Dorsolateral prefrontal cortex (tissue), 120 donors: ENCODE measurements at regions of chr20 and their contacts with region 1.

Region 1: GRCh38 chr20:38645980-38646858 is 44.6 kb downstream of the ARHGAP40 start:
- DNase-seq: peak; percentile 54 to 87 (median 68)
- H3K4me3 ChIP-seq: peak overlapping the region in 57 of 59 donors; percentile 5 to 68 (median 47)
- H3K27ac ChIP-seq: peak overlapping the region in 2 of 59 donors; percentile 16 to 27
- H3K27me3 ChIP-seq: peaks cover 0 to 18% (median 4%) of the 10 kb centered on the region in 45 donors
- CTCF ChIP-seq: peak; percentile 80 to 100 (median 97)

Region 2: GRCh38 chr20:38581013-38581412 is 65.2 kb before region 1 on chr20 and contains the start of gene ADIG:
- intact Hi-C with region 1: loop called in 1 of 2 experiments (anchors 10 kb)
- DNase-seq: peak in 9 of 10 donors; percentile 39 to 76 (median 70)
- H3K4me3 ChIP-seq: no peak within 1 kb of the TSS
- H3K27ac ChIP-seq: peak within 1 kb of the TSS in 15 of 59 donors; percentile 0 to 62 (median 29)
- H3K27me3 ChIP-seq: no peaks in the 10 kb centered on the region
- CTCF ChIP-seq: peak in 11 of 56 donors; percentile 6 to 41 (median 23)
- total RNA-seq, gene ADIG: 0.74 to 2.0 (median 1.3) TPM in 9 of 120 experiments, not detected in the others

Region 3: DNA sequence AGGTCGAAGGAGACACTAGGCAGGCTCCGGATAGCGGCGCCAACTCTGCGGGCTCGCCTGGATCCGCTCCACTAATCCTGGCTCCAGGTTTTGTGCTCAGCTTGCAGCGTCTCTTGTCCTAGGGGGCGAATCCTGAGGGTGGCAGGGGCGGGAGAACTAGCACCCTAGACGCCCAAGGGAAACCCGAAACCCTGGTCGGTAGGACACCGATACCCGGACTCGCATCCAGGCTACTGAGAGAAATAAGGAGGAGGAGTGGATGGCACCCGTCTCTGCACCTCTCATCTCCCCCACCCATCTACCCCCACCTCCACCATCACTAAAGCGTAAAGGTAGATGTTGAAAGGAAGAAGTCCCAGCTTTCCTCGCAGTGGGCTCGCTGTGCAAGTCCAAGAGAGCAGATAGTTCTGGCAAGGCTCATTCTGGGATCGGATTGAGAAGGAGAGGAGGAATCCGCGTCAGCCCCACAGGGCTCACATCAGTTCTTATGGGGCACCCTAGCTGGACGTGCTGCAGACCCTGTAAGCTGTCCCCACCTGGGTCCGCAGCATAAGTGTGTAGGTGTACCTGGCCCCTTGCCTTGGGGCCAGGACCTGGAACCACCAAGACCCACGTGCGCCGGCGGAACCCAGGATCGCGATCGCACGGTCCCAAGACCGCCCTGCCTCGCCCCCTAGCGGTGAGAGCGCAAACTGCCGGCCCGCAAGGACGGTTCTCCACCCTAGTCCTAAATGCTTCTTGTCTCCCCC is 84.9 kb after region 1 on chr20:
- intact Hi-C with region 1: loop called (anchors 5 kb)
- DNase-seq: peak in 8 of 10 donors; percentile 49 to 81 (median 70)
- H3K4me3 ChIP-seq: peak overlapping the region in 58 of 59 donors; percentile 7 to 67 (median 42)
- H3K27ac ChIP-seq: peak overlapping the region in 1 of 59 donors; percentile 40
- H3K27me3 ChIP-seq: peaks cover 22 to 88% (median 71%) of the 10 kb centered on the region in 45 donors
- CTCF ChIP-seq: peak; percentile 79 to 99 (median 96)

Region 4: GRCh38 chr20:38748097-38748860 is 102.1 kb after region 1 on chr20 and contains the start of gene ACTR5:
- intact Hi-C with region 1: loop called (anchors 1 to 2 kb)
- DNase-seq: peak; percentile 81 to 92 (median 89)
- H3K4me3 ChIP-seq: peak within 1 kb of the TSS; percentile 47 to 97 (median 89)
- H3K27ac ChIP-seq: peak within 1 kb of the TSS in 57 of 59 donors; percentile 16 to 96 (median 85)
- H3K27me3 ChIP-seq: peaks cover 0 to 5% (median 0%) of the 10 kb centered on the region in 45 donors
- CTCF ChIP-seq: peak in 15 of 56 donors; percentile 0 to 46 (median 28)
- total RNA-seq, gene ACTR5: 7.0 to 13.6 (median 9.9) TPM

Region 5: GRCh38 chr20:38893565-38894090 is 247.4 kb after region 1 on chr20:
- intact Hi-C with region 1: loop called (anchors 1 to 5 kb)
- DNase-seq: peak; percentile 76 to 89 (median 82)
- H3K4me3 ChIP-seq: peak overlapping the region in 29 of 59 donors; percentile 3 to 39 (median 23)
- H3K27ac ChIP-seq: peak overlapping the region; percentile 58 to 100 (median 99)
- H3K27me3 ChIP-seq: no peaks in the 10 kb centered on the region
- CTCF ChIP-seq: peak; percentile 45 to 97 (median 93)

Region 6: DNA sequence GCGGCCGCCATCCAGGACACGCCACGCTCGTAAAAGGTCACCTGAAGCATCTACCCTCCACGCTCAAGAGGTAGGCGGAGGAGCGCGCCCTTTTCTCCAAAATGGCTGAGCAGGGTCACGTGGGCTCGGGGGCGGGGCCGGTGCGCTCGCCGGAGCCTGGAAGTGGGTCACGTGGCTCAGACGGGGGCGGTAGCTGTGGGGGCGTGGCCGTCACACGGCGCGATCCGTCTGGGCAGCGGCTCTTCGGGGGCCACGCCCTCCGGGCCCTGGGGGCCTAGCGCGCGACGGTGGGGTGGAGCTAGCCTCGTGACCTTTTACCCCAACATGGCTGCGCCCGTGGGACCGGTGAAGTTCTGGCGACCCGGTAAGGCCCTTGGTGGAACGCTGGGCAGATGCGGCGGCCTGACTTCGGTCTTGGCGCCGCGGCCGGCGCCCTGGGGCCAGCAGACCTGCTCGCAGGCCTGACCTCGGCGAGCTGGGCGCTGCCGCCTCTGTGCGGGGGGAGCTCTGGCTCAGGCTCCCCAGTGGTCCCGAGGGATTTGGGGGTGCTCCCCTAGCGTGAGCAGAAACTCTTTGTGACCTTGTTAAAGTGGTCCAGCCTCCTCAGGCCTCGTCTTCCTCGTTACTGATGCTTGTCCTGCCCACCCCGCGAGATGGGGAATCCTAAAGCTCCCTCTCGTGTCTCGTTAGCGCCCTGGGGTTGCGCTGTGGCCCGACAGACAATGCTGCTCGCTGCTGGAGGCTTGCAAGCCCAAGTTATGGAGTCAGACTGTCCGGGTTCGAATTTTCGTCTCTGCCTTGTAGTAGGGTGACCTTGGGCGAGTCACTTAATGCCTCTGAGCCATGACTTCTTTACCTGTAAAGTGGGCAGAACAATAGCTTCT is 316.1 kb after region 1 on chr20 and contains the start of gene DHX35:
- intact Hi-C with region 1: loop called in 1 of 2 experiments (anchors 5 kb)
- DNase-seq: peak; percentile 96 to 99 (median 98)
- H3K4me3 ChIP-seq: peak within 1 kb of the TSS; percentile 65 to 100 (median 95)
- H3K27ac ChIP-seq: peak within 1 kb of the TSS; percentile 55 to 95 (median 89)
- H3K27me3 ChIP-seq: no peaks in the 10 kb centered on the region
- CTCF ChIP-seq: peak in 45 of 56 donors; percentile 5 to 57 (median 30)
- total RNA-seq, gene DHX35: 7.4 to 19.8 (median 13.7) TPM

Region 7: GRCh38 chr20:39049684-39050554 is 403.7 kb after region 1 on chr20:
- intact Hi-C with region 1: loop called (anchors 2 kb)
- DNase-seq: peak; percentile 58 to 89 (median 72)
- H3K4me3 ChIP-seq: peak overlapping the region; percentile 39 to 91 (median 72)
- H3K27ac ChIP-seq: peak overlapping the region in 54 of 59 donors; percentile 6 to 91 (median 74)
- H3K27me3 ChIP-seq: no peaks in the 10 kb centered on the region
- CTCF ChIP-seq: peak; percentile 73 to 100 (median 98)